ENCODE measurements at regions of chr2 and their contacts with region 1.

Region 1: DNA sequence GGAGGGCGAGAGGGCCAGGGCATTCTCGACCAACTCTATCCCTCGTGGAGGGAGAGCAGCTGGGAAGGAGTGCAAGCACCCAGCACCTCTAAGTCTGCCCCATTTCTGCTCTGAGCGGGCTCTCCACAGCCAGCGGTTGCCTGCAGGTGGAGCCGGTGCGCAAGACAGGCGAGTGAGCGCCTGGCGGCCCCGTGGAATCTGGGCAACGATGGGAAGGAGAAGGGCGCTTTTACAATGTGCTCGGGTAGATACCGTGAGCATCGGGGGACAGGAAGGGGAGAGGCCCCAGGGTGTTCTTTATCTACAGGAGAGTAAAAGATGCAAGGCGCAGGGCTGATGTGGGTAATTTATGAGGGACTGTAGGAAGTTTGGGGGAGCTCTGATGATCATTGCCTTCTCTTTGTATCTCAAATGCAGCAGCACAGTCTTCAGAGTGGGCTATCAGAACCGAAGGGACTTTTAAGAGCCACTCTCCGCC is 867 bp upstream of the TTL start:
- DNase-seq: peak; percentile 88
- H3K4me3 ChIP-seq: peak overlapping the region; percentile 60 to 77 (median 72)
- H3K27ac ChIP-seq: peak overlapping the region; percentile 84 to 94 (median 88)
- H3K4me1 ChIP-seq: peaks cover 0 to 30% (median 22%) of the 10 kb centered on the region in 4 donors
- H3K27me3 ChIP-seq: no peaks in the 10 kb centered on the region
- CTCF ChIP-seq: peak; percentile 53 to 87 (median 65)
- EP300 ChIP-seq: no peak
- POLR2A ChIP-seq: no peak

Region 2: DNA sequence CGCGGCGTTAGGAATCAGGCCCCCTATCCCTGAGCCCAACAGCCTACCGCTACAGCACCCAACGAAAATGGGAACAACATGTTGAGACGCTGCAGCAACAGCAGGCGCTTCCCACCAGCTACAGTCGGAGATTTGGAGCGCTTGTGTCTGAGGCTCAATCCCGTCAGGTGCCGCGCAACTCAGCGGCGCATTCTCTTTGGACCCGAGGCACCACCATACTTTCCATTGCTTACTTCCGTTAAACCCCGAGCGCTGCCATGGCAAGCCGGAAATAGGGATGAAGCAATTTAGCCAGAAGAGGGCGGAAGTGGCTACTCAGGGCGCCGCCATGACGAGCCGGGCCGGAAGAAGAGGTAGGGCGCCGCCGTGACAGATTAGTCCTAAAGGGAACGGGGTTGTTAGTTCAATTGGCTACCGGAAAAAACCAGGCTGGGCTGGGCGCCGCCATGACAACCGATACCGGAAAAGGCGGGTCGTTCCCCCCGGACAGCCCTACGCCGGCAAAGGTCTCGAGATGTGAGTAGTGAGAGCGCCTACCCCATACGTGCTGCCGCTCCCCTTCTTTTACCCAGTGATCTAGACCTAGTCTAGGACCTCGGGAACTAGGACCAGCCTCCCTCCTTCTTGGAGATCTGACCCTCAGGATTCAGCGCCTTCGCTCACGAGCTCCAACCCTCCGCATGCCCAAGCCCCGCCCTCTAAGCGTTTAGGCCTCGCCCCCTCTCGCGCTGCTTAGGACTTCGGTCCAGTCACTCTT is 103.2 kb after region 1 on chr2 and contains the start of gene CHCHD5:
- intact Hi-C with region 1: loop called (anchors 1 kb)
- DNase-seq: peak; percentile 98
- H3K4me3 ChIP-seq: peak within 1 kb of the TSS; percentile 62 to 69 (median 66)
- H3K27ac ChIP-seq: peak within 1 kb of the TSS; percentile 85 to 94 (median 93)
- H3K4me1 ChIP-seq: peaks cover 0 to 25% (median 18%) of the 10 kb centered on the region in 4 donors
- H3K27me3 ChIP-seq: no peaks in the 10 kb centered on the region
- CTCF ChIP-seq: peak in 2 of 4 experiments; percentile 17 to 27
- EP300 ChIP-seq: peak in 2 of 4 donors; percentile 15 to 16
- POLR2A ChIP-seq: peak; percentile 18 to 36
- total RNA-seq, gene CHCHD5: 13.8 to 36.4 (median 25.3) TPM